GM12878 (cell line): ENCODE measurements at regions of chrX and their contacts with region 1.

Region 1: GRCh38 chrX:118459494-118459893 is 36.1 kb upstream of the DOCK11 start:
- DNase-seq: peak; percentile 2
- ATAC-seq: peak; percentile 81
- H3K4me3 ChIP-seq: no peak overlapping the region
- H3K27ac ChIP-seq: no peak overlapping the region
- H3K4me1 ChIP-seq: no peaks in the 10 kb centered on the region
- H3K27me3 ChIP-seq: no peaks in the 10 kb centered on the region
- CTCF ChIP-seq: peak; percentile 43 to 60 (median 44); a peak in 4 of 6 replicates
- EP300 ChIP-seq: no peak
- POLR2A ChIP-seq: no peak
- RAD21 ChIP-seq: peak; percentile 80

Region 2: DNA sequence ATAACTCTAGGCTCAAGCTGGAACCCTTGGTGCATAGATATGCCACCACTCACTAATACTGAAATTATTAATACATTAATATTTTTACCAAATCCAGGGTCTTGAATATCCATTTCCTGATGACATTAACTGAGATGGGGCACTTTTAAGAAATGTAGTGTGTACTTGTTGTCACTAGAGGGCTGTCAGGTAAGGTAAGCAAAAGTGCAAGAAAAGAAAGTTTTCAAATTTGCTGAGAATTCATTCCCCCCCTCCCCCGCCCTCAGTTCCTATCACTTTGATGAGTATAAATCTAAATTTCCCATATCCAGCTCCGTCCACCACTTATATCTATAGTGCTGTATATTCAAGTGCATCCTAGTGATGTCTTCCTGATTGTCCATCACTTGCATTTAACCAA is 134.0 kb before region 1 on chrX:
- CTCF ChIA-PET with region 1: interaction called, 10 read pairs
- POLR2A ChIA-PET with region 1: no interaction called
- RAD21 ChIA-PET with region 1: interaction called, 3 read pairs
- SMC1A ChIA-PET with region 1: interaction called, 3 read pairs
- in situ Hi-C with region 1: no loop called
- intact Hi-C with region 1: no loop called
- DNase-seq: no peak
- ATAC-seq: peak; percentile 55; the same call in 2 of the 3 replicates
- H3K4me3 ChIP-seq: no peak overlapping the region
- H3K27ac ChIP-seq: no peak overlapping the region
- H3K4me1 ChIP-seq: no peaks in the 10 kb centered on the region
- H3K27me3 ChIP-seq: no peaks in the 10 kb centered on the region
- CTCF ChIP-seq: peak; percentile 27 to 34 (median 32); a peak in 5 of 6 replicates
- EP300 ChIP-seq: no peak
- POLR2A ChIP-seq: no peak
- RAD21 ChIP-seq: peak; percentile 52

Region 3: GRCh38 chrX:118437283-118437682 is 22.2 kb before region 1 on chrX:
- CTCF ChIA-PET with region 1: no interaction called
- POLR2A ChIA-PET with region 1: no interaction called
- RAD21 ChIA-PET with region 1: no interaction called
- SMC1A ChIA-PET with region 1: no interaction called
- in situ Hi-C with region 1: no loop called
- intact Hi-C with region 1: no loop called
- DNase-seq: no peak
- ATAC-seq: no peak
- H3K4me3 ChIP-seq: no peak overlapping the region
- H3K27ac ChIP-seq: no peak overlapping the region
- H3K4me1 ChIP-seq: no peaks in the 10 kb centered on the region
- H3K27me3 ChIP-seq: no peaks in the 10 kb centered on the region
- CTCF ChIP-seq: no peak
- EP300 ChIP-seq: no peak
- POLR2A ChIP-seq: no peak
- RAD21 ChIP-seq: no peak

Region 4: DNA sequence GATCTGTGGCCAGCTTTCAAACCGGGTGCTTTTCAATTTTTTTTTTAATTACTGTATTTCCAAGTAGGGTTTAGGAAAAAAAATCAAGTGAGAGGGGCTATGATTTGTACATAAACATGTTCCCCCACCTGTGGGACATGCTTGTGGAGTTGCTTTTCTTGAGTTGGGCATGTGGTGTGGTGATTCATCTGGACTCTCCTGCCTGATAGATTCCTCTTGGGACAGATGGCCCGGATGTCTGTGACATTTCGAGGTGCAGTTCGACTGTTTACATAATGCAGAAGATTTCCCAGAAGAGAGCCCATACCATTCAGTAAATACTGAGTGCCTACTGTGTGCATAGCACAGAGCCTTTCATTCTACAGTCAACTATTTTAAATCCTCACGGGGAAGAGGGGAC is 86.0 kb after region 1 on chrX:
- CTCF ChIA-PET with region 1: interaction called, 3 read pairs
- POLR2A ChIA-PET with region 1: no interaction called
- RAD21 ChIA-PET with region 1: no interaction called
- SMC1A ChIA-PET with region 1: no interaction called
- in situ Hi-C with region 1: no loop called
- intact Hi-C with region 1: loop called (anchors 5 kb)
- DNase-seq: no peak
- ATAC-seq: no peak
- H3K4me3 ChIP-seq: no peak overlapping the region
- H3K27ac ChIP-seq: no peak overlapping the region
- H3K4me1 ChIP-seq: no peaks in the 10 kb centered on the region
- H3K27me3 ChIP-seq: no peaks in the 10 kb centered on the region
- CTCF ChIP-seq: no peak
- EP300 ChIP-seq: no peak
- POLR2A ChIP-seq: no peak
- RAD21 ChIP-seq: no peak